ENCODE measurements at regions of chr14 and their contacts with region 1.

Region 1: DNA sequence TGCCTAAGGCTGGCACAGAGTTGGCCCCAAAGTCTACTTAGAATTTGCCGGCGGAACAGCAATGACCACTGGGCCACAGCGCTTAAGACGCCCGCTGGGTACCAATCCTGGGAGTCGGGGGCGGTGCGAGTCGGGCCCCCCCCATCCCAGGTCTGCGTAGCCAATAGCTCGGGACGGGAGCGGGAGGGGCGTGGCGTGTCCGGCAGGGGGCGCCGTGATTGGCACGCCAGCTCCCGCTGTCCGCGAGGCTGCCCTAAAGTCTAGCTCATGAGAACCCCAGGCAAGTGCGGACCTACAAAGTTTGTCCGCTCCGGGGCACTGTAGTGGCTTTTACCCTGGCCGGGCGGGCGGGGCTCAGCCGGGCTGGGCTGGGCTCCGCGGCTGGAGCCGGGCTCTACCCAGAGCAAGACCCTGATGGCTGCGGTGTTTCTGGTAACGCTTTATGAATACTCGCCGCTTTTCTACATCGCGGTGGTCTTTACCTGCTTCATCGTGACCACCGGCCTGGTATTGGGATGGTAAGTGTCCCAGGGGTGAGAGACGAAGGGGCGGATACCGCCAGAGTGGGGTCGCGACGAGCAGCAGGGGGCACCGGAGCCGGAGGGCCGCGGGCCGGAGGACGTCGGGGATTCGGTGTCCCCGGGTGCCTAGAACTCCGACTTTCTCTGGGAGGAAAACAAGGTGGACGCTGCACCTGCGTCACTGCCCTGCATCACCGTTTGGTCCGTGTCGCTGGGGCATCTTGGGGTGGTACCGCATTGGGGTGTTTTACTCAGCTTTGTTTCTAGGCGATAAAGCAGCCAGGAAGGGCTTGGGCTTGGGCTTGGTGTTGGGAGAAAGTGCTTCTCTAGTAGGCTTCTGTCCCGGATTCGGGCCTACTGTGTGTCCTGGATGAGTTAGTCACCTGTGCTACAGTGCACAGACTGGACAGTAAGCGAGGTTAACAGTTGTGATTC is at the start of gene CGRRF1:
- DNase-seq: peak; percentile 99
- H3K4me3 Mint-ChIP-seq: peak within 1 kb of the TSS; percentile 94
- H3K27ac Mint-ChIP-seq: peak within 1 kb of the TSS; percentile 76
- H3K4me1 Mint-ChIP-seq: peaks cover 39% of the 10 kb centered on the region
- H3K27me3 Mint-ChIP-seq: no peaks in the 10 kb centered on the region
- total RNA-seq, gene CGRRF1: 13.7 to 15.1 TPM

Region 2: GRCh38 chr14:54396493-54397335 is 113.1 kb before region 1 on chr14 and contains the start of gene CDKN3:
- CTCF ChIA-PET with region 1: no interaction called
- POLR2A ChIA-PET with region 1: no interaction called
- intact Hi-C with region 1: loop called (anchors 1 kb)
- DNase-seq: peak; percentile 99
- H3K4me3 Mint-ChIP-seq: peak within 1 kb of the TSS; percentile 88
- H3K27ac Mint-ChIP-seq: peak within 1 kb of the TSS; percentile 70
- H3K4me1 Mint-ChIP-seq: peaks cover 17% of the 10 kb centered on the region
- H3K27me3 Mint-ChIP-seq: no peaks in the 10 kb centered on the region
- total RNA-seq, gene CDKN3: 96.2 to 99.2 TPM

Region 3: DNA sequence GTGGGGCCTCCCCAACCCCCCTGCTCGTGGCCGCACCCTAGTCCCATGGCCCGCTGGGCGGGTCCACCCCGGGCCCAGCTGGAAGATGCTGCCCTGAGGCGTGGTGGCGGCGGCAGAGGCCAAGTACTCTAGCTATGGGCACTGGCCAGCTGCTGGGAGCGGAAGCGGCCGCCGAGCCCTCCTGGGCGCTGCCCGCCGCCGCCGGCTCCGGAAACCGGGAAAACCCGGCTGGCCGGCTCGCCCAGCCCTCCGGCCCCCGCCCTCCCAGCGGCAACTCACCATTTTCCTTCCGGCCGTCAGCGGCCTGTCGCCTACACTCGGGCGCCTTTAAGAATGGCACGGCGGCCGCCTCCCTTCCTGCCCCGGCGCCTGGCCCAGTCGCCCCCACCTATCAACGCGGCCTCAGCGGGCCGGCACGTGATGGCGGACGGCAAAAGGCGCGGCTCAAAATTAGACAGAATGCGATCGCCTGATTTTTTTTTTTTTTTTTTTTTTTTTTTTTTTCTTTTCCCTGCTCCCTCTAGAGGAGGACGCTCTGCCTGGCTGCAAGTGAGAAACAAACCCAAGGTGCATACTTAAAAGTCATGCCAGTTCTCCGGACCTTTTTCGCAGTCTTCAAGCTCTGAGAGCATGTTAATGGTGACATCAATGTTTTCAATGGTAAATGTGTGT is 21.0 kb before region 1 on chr14 and contains the start of gene GMFB:
- CTCF ChIA-PET with region 1: interaction called, 30 read pairs
- POLR2A ChIA-PET with region 1: interaction called, 11 read pairs
- intact Hi-C with region 1: loop called (anchors 1 kb)
- DNase-seq: peak; percentile 94
- H3K4me3 Mint-ChIP-seq: peak within 1 kb of the TSS; percentile 89
- H3K27ac Mint-ChIP-seq: peak within 1 kb of the TSS; percentile 90
- H3K4me1 Mint-ChIP-seq: peaks cover 55% of the 10 kb centered on the region
- H3K27me3 Mint-ChIP-seq: no peaks in the 10 kb centered on the region
- total RNA-seq, gene GMFB: 39.0 to 43.6 TPM

Region 4: GRCh38 chr14:54537650-54538049 is 27.8 kb after region 1 on chr14:
- CTCF ChIA-PET with region 1: no interaction called
- POLR2A ChIA-PET with region 1: no interaction called
- intact Hi-C with region 1: no loop called
- DNase-seq: no peak
- H3K4me3 Mint-ChIP-seq: no peak overlapping the region
- H3K27ac Mint-ChIP-seq: no peak overlapping the region
- H3K4me1 Mint-ChIP-seq: no peaks in the 10 kb centered on the region
- H3K27me3 Mint-ChIP-seq: no peaks in the 10 kb centered on the region

Region 5: GRCh38 chr14:54627540-54628363 is 117.9 kb after region 1 on chr14:
- CTCF ChIA-PET with region 1: no interaction called
- POLR2A ChIA-PET with region 1: no interaction called
- intact Hi-C with region 1: loop called (anchors 5 kb)
- DNase-seq: peak; percentile 49
- H3K4me3 Mint-ChIP-seq: peak overlapping the region; percentile 55
- H3K27ac Mint-ChIP-seq: peak overlapping the region; percentile 78
- H3K4me1 Mint-ChIP-seq: peaks cover 40% of the 10 kb centered on the region
- H3K27me3 Mint-ChIP-seq: no peaks in the 10 kb centered on the region